ENCODE measurements at regions of chr12 and their contacts with region 1.

Region 1: GRCh38 chr12:49069507-49070346 is at the start of gene RHEBL1:
- DNase-seq: peak; percentile 99
- H3K4me3 ChIP-seq: peak within 1 kb of the TSS; percentile 83
- H3K27ac ChIP-seq: peak within 1 kb of the TSS; percentile 82
- H3K4me1 ChIP-seq: peaks cover 19% of the 10 kb centered on the region
- H3K27me3 ChIP-seq: no peaks in the 10 kb centered on the region
- CTCF ChIP-seq: no peak
- total RNA-seq, gene RHEBL1: not detected

Region 2: GRCh38 chr12:48542300-48542928 is 527.3 kb before region 1 on chr12:
- intact Hi-C with region 1: no loop called
- DNase-seq: no peak
- H3K4me3 ChIP-seq: no peak overlapping the region
- H3K27ac ChIP-seq: no peak overlapping the region
- H3K4me1 ChIP-seq: no peaks in the 10 kb centered on the region
- H3K27me3 ChIP-seq: peaks cover 37% of the 10 kb centered on the region
- CTCF ChIP-seq: peak; percentile 55

Region 3: GRCh38 chr12:49121047-49121696 is 51.4 kb after region 1 on chr12:
- intact Hi-C with region 1: loop called (anchors 10 kb)
- DNase-seq: peak; percentile 32
- H3K4me3 ChIP-seq: no peak overlapping the region
- H3K27ac ChIP-seq: no peak overlapping the region
- H3K4me1 ChIP-seq: no peaks in the 10 kb centered on the region
- H3K27me3 ChIP-seq: no peaks in the 10 kb centered on the region
- CTCF ChIP-seq: peak; percentile 75

Region 4: DNA sequence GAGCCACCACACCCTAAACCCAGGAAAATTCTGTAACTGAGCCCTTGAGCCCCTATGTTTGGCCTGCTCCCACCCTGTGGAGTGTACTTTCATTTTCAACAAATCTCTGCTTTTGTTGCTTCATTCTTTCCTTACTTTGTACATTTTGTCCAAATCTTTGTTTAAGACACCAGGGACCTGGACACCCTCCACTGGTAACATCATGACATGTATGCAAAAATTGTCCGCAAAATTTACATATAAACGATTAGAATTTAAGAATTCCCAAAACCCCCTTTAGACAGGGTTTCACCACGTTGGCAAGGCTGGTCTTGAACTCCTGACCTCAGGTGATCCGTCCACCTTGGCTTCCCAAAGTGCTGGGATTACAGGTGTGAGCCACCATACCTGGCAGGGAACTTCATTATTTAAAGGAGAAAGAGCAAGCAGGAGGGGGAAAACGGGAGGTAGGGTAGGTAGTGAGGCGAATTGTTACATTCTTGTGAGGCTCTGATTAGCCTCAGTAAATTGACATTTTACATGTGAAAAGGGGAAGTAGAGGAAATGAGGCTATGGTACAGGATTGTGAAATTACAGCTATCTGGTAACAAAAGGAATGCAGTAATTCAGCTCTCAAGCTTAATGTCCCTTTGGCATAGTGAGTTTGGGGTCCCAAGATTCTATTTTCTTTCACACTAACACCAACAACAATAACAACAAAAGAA is 91.5 kb after region 1 on chr12:
- intact Hi-C with region 1: no loop called
- DNase-seq: no peak
- H3K4me3 ChIP-seq: no peak overlapping the region
- H3K27ac ChIP-seq: no peak overlapping the region
- H3K4me1 ChIP-seq: no peaks in the 10 kb centered on the region
- H3K27me3 ChIP-seq: no peaks in the 10 kb centered on the region
- CTCF ChIP-seq: no peak

Measured in left ventricle myocardium inferior (tissue), 1 donor.